GM12878 (cell line): ENCODE measurements at regions of chr3 and their contacts with region 1.

Region 1: GRCh38 chr3:5194341-5195159 is 7.0 kb downstream of the EDEM1 start:
- DNase-seq: no peak
- ATAC-seq: peak; percentile 49
- H3K4me3 ChIP-seq: peak overlapping the region; percentile 39; the same call in 1 of the 2 replicates
- H3K27ac ChIP-seq: peak overlapping the region; percentile 94
- H3K4me1 ChIP-seq: peaks cover 57% of the 10 kb centered on the region
- H3K27me3 ChIP-seq: no peaks in the 10 kb centered on the region
- CTCF ChIP-seq: no peak
- EP300 ChIP-seq: no peak
- POLR2A ChIP-seq: peak; percentile 20; the same call in 1 of the 2 replicates
- RAD21 ChIP-seq: no peak

Region 2: DNA sequence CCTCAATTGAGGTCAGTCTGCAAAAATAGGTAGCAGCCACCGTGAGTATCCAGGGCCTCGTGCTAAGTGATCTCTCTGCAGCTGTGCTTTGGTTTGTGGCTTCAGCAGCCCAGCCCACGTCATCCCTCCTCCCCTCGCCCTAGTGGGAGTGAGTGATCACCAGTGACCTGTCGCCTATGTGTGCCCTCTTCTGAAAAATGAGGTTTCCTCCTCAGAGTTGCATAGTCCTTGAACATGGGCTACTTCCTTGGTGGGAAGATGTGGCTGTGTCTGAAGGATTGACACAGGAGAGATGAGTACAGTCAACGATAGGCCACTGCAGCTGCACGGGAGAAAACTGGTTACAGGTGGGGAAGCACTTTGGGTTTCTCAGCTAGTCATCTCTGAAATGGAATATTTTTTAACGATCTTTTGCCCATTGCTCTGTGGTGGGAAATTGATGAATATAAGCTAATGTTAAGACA is 360.1 kb before region 1 on chr3:
- CTCF ChIA-PET with region 1: no interaction called
- POLR2A ChIA-PET with region 1: interaction called, 5 read pairs
- RAD21 ChIA-PET with region 1: no interaction called
- SMC1A ChIA-PET with region 1: no interaction called
- in situ Hi-C with region 1: loop called (anchors 10 kb)
- intact Hi-C with region 1: loop called (anchors 2 kb)
- DNase-seq: no peak
- ATAC-seq: peak; percentile 63
- H3K4me3 ChIP-seq: no peak overlapping the region
- H3K27ac ChIP-seq: peak overlapping the region; percentile 43; the same call in 1 of the 2 replicates
- H3K4me1 ChIP-seq: peaks cover 43% of the 10 kb centered on the region
- H3K27me3 ChIP-seq: no peaks in the 10 kb centered on the region
- CTCF ChIP-seq: no peak
- EP300 ChIP-seq: peak; percentile 89 to 95; a peak in 3 of 4 replicates
- POLR2A ChIP-seq: no peak
- RAD21 ChIP-seq: 0 out of 2 replicates have a peak, but pooled peaks have one; percentile 4

Region 3: DNA sequence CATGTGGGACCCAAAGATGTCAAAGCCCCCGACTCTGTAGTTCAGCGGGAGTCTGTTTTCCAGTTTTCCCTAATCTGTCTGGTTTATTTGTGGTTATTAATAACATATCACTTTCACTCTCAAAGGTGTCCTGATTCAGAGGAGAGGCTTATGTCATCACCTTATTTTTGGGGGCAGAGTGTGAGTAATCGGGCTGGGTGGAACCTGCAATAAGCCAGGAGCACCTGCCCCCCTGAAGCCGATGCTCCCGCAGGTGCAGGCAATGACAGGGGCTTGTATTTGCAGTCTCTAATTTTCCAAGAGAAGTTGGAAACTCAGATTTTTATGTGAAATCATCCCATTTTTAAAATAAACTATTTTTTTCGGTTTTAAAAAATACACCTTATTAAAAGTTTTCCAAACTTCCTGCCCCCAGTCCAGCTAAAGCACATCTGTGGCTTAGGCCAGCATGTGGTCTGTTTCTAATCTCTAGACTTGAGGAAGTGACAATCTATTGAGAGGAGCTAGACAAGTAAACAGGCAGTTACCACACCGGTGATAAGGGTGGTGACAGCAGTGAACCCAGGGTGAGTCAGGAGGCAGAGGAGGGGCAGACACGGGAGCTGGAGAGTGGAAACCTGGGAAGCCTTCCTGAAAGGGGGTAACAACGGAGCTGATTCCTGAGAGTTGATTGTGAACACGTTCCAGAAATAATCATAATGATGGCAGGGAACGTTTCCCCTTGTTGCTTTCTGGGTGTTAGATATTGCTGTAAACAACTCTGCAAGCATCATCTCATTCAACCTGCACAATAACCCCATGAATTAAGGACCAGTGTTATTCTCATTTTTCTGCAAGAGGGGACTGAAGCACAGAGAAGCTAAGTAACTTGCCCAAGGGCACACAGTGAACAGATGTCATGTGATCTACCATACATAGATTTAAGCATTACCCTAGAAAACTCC is 178.1 kb before region 1 on chr3:
- CTCF ChIA-PET with region 1: no interaction called
- POLR2A ChIA-PET with region 1: no interaction called
- RAD21 ChIA-PET with region 1: interaction called, 3 read pairs
- SMC1A ChIA-PET with region 1: interaction called, 3 read pairs
- in situ Hi-C with region 1: no loop called
- intact Hi-C with region 1: loop called (anchors 10 kb)
- DNase-seq: no peak
- ATAC-seq: peak; percentile 63
- H3K4me3 ChIP-seq: no peak overlapping the region
- H3K27ac ChIP-seq: no peak overlapping the region
- H3K4me1 ChIP-seq: peaks cover 43% of the 10 kb centered on the region
- H3K27me3 ChIP-seq: no peaks in the 10 kb centered on the region
- CTCF ChIP-seq: no peak
- EP300 ChIP-seq: peak; percentile 69 to 76; a peak in 2 of 4 replicates
- POLR2A ChIP-seq: no peak
- RAD21 ChIP-seq: no peak

Region 4: DNA sequence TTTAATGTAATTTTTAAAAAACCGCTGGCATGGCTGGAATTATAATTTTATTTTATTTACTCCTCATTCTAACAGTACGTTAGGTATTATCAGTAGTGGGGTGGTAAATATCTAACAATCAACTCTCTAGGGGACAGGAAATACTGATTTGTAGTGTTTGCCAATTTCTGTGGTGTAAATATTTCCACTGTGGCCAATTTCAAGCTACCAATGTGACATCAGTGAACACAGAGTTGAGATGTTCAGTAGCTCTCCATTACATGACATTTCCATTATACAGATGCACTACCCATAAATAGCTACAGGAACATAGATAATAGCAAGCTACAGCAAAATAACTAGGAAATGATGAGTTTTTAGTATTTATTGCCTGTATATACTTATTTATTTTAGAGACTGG is 82.5 kb before region 1 on chr3:
- CTCF ChIA-PET with region 1: no interaction called
- POLR2A ChIA-PET with region 1: no interaction called
- RAD21 ChIA-PET with region 1: no interaction called
- SMC1A ChIA-PET with region 1: no interaction called
- in situ Hi-C with region 1: no loop called
- intact Hi-C with region 1: no loop called
- DNase-seq: no peak
- ATAC-seq: no peak
- H3K4me3 ChIP-seq: no peak overlapping the region
- H3K27ac ChIP-seq: no peak overlapping the region
- H3K4me1 ChIP-seq: peaks cover 5% of the 10 kb centered on the region; the same call in 1 of the 2 replicates
- H3K27me3 ChIP-seq: no peaks in the 10 kb centered on the region
- CTCF ChIP-seq: no peak
- EP300 ChIP-seq: no peak
- POLR2A ChIP-seq: no peak
- RAD21 ChIP-seq: no peak

Region 5: DNA sequence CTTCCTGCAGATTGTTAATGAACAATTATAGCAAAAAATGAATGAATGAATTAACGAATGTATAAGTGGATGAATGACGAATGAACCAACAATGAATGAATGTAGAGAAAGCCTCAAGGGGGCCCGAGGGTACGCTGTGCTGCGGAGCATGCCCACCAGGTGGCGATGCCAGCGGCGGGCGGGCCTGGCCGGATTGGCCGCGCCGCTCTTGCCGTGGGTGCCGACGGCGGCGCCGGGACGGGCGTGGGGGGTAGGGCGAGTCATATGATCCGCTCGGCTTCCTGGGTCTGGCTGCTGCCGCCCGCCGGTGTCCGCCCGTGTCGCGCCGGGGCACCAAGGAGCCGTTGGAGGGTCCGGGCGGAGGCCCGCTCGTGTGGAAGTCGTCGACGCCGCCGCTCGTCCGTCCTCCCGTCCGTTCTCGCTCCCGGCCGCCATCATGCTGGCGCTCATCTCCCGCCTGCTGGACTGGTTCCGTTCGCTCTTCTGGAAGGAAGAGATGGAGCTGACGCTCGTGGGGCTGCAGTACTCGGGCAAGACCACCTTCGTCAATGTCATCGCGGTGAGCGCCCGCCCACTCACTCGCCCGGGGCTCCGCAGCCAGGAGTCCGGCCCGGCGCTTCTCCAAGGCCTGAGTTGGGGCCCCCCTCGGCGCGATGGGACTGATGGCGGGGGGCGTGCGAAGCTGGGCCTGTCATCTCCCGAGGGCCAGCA is 72.4 kb before region 1 on chr3 and contains the start of gene ARL8B:
- CTCF ChIA-PET with region 1: interaction called, 17 read pairs
- POLR2A ChIA-PET with region 1: interaction called, 8 read pairs
- RAD21 ChIA-PET with region 1: interaction called, 10 read pairs
- SMC1A ChIA-PET with region 1: interaction called, 16 read pairs
- in situ Hi-C with region 1: no loop called
- intact Hi-C with region 1: no loop called
- DNase-seq: no peak
- ATAC-seq: peak; percentile 97
- H3K4me3 ChIP-seq: peak within 1 kb of the TSS; percentile 76
- H3K27ac ChIP-seq: peak within 1 kb of the TSS; percentile 78
- H3K4me1 ChIP-seq: no peaks in the 10 kb centered on the region
- H3K27me3 ChIP-seq: no peaks in the 10 kb centered on the region
- CTCF ChIP-seq: peak; percentile 88 to 99 (median 97); a peak in 5 of 6 replicates
- EP300 ChIP-seq: peak; percentile 36 to 66; a peak in 2 of 4 replicates
- POLR2A ChIP-seq: peak; percentile 98
- RAD21 ChIP-seq: peak; percentile 51; the same call in 1 of the 2 replicates
- polyA plus RNA-seq, gene ARL8B: 36.5 to 38.5 TPM

Region 6: GRCh38 chr3:5181469-5182141 is 12.9 kb before region 1 on chr3:
- CTCF ChIA-PET with region 1: interaction called, 63 read pairs
- POLR2A ChIA-PET with region 1: interaction called, 68 read pairs
- RAD21 ChIA-PET with region 1: interaction called, 45 read pairs
- SMC1A ChIA-PET with region 1: interaction called, 162 read pairs
- in situ Hi-C with region 1: no loop called
- intact Hi-C with region 1: no loop called
- DNase-seq: no peak
- ATAC-seq: peak; percentile 23
- H3K4me3 ChIP-seq: peak overlapping the region; percentile 34; the same call in 1 of the 2 replicates
- H3K27ac ChIP-seq: peak overlapping the region; percentile 78
- H3K4me1 ChIP-seq: peaks cover 42% of the 10 kb centered on the region
- H3K27me3 ChIP-seq: no peaks in the 10 kb centered on the region
- CTCF ChIP-seq: no peak
- EP300 ChIP-seq: no peak
- POLR2A ChIP-seq: no peak
- RAD21 ChIP-seq: 0 out of 2 replicates have a peak, but pooled peaks have one; percentile 6

Region 7: GRCh38 chr3:5205165-5205941 is 10.8 kb after region 1 on chr3:
- CTCF ChIA-PET with region 1: interaction called, 8 read pairs
- POLR2A ChIA-PET with region 1: interaction called, 15 read pairs
- RAD21 ChIA-PET with region 1: interaction called, 14 read pairs
- SMC1A ChIA-PET with region 1: interaction called, 23 read pairs
- in situ Hi-C with region 1: no loop called
- intact Hi-C with region 1: no loop called
- DNase-seq: peak; percentile 86
- ATAC-seq: peak; percentile 98
- H3K4me3 ChIP-seq: no peak overlapping the region
- H3K27ac ChIP-seq: peak overlapping the region; percentile 38
- H3K4me1 ChIP-seq: peaks cover 9% of the 10 kb centered on the region
- H3K27me3 ChIP-seq: no peaks in the 10 kb centered on the region
- CTCF ChIP-seq: no peak
- EP300 ChIP-seq: peak; percentile 62 to 88; a peak in 3 of 4 replicates
- POLR2A ChIP-seq: 0 out of 2 replicates have a peak, but pooled peaks have one; percentile 40
- RAD21 ChIP-seq: peak; percentile 29; the same call in 1 of the 2 replicates

Region 8: GRCh38 chr3:5298453-5298852 is 103.9 kb after region 1 on chr3:
- CTCF ChIA-PET with region 1: interaction called, 3 read pairs
- POLR2A ChIA-PET with region 1: interaction called, 4 read pairs
- RAD21 ChIA-PET with region 1: interaction called, 15 read pairs
- SMC1A ChIA-PET with region 1: interaction called, 18 read pairs
- in situ Hi-C with region 1: no loop called
- intact Hi-C with region 1: no loop called
- DNase-seq: peak; percentile 69
- ATAC-seq: peak; percentile 98
- H3K4me3 ChIP-seq: no peak overlapping the region
- H3K27ac ChIP-seq: no peak overlapping the region
- H3K4me1 ChIP-seq: peaks cover 14% of the 10 kb centered on the region
- H3K27me3 ChIP-seq: no peaks in the 10 kb centered on the region
- CTCF ChIP-seq: no peak
- EP300 ChIP-seq: peak; percentile 68 to 92; a peak in 3 of 4 replicates
- POLR2A ChIP-seq: no peak
- RAD21 ChIP-seq: no peak